WTC11 (cell line): ENCODE measurements at regions of chr13 and their contacts with region 1.

Region 1: DNA sequence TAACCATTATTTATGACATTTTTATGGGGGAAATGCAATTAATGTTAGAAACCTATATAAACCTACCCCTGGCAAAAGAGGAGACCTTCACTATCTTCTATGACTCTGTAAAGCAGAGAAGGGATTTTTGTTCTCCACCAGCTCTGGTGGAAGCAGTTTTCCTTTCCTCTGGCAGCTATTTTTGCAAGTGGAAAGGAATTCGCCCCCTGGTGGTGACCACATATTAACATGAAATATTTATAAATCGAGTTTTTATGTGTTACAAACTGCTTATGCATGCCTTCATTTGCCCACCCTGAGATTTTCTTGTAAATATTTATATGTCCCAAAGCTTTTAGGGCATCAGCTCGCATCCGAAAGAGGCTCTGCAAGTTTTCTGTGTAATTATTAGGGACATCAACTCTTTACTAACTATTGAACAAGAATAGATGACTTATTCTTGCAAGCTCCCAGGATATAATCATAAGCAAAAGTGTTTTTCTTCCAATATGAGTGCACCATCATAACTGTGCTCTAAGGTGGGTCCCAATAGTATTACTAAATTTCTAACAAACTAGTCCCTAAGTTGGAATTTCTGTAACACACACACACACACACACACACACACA is 62.4 kb downstream of the SERTM1 start:
- DNase-seq: peak; percentile 24
- ATAC-seq: no peak
- H3K4me3 Mint-ChIP-seq: no peak overlapping the region
- H3K27ac Mint-ChIP-seq: no peak overlapping the region
- H3K4me1 Mint-ChIP-seq: peaks cover 5% of the 10 kb centered on the region
- H3K27me3 Mint-ChIP-seq: no peaks in the 10 kb centered on the region
- CTCF ChIP-seq: peak; percentile 48; the same call in 1 of the 2 replicates

Region 2: DNA sequence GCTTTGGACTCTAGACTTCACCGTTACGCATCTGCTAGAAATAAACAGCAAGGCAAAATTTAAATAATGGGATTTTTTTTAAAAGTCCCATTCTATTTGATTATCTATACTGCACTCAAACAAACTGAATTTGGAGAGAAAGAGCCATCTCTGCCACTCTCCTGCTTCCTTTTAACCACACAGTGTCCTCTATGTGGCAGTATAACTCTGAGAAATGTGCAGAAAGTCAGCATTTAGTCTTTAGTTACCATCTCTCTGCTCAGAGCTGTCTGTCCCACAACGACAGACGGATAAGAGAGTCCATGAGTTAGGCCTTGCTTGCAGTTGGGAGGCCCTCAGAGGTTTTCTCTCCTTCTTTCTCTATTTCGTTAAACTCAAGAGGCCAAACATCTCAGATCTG is 282.7 kb before region 1 on chr13:
- CTCF ChIA-PET with region 1: interaction called, 32 read pairs
- POLR2A ChIA-PET with region 1: no interaction called
- DNase-seq: no peak
- ATAC-seq: peak; percentile 89
- H3K4me3 Mint-ChIP-seq: no peak overlapping the region
- H3K27ac Mint-ChIP-seq: no peak overlapping the region
- H3K4me1 Mint-ChIP-seq: peaks cover 25% of the 10 kb centered on the region
- H3K27me3 Mint-ChIP-seq: no peaks in the 10 kb centered on the region; the same call in 1 of the 2 replicates
- CTCF ChIP-seq: no peak

Region 3: GRCh38 chr13:36724141-36724540 is 12.1 kb before region 1 on chr13:
- CTCF ChIA-PET with region 1: interaction called, 14 read pairs
- POLR2A ChIA-PET with region 1: no interaction called
- DNase-seq: no peak
- ATAC-seq: peak; percentile 53; the same call in 1 of the 2 replicates
- H3K4me3 Mint-ChIP-seq: no peak overlapping the region
- H3K27ac Mint-ChIP-seq: no peak overlapping the region
- H3K4me1 Mint-ChIP-seq: peaks cover 3% of the 10 kb centered on the region
- H3K27me3 Mint-ChIP-seq: no peaks in the 10 kb centered on the region; the same call in 1 of the 2 replicates
- CTCF ChIP-seq: no peak